ENCODE measurements at regions of chr10 and their contacts with region 1.

Region 1: DNA sequence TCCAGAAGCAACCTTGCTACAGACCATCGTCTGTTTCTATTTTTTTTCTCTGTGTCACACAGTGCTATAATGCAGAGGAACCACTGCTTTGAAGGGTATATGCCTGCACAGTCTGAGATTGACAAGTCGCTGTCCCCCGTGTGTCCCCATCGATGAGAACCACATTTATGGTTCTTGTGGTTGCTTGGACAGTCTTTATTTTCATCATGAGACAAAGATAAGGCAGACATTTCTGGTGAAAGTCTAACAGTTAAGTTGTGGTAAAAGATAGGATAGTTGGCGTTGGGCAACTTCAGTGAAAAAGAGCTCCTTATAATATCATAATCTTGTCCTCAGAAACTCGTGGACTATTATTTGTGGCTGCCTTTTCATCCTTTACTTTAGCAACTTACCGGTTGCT is 6.3 kb upstream of the AKR1E2 start:
- DNase-seq: no peak
- H3K4me3 ChIP-seq: no peak overlapping the region
- H3K27ac ChIP-seq: no peak overlapping the region
- H3K4me1 ChIP-seq: no peaks in the 10 kb centered on the region
- H3K27me3 ChIP-seq: no peaks in the 10 kb centered on the region
- CTCF ChIP-seq: no peak

Region 2: GRCh38 chr10:4028027-4028471 is 791.7 kb before region 1 on chr10:
- CTCF ChIA-PET with region 1: no interaction called
- POLR2A ChIA-PET with region 1: no interaction called
- intact Hi-C with region 1: no loop called
- DNase-seq: no peak
- H3K4me3 ChIP-seq: no peak overlapping the region
- H3K27ac ChIP-seq: no peak overlapping the region
- H3K4me1 ChIP-seq: no peaks in the 10 kb centered on the region
- H3K27me3 ChIP-seq: no peaks in the 10 kb centered on the region
- CTCF ChIP-seq: no peak

Region 3: GRCh38 chr10:5623081-5623748 is 803.5 kb after region 1 on chr10:
- CTCF ChIA-PET with region 1: interaction called, 9 read pairs
- POLR2A ChIA-PET with region 1: no interaction called
- intact Hi-C with region 1: loop called (anchors 5 kb)
- DNase-seq: peak; percentile 90
- H3K4me3 ChIP-seq: no peak overlapping the region
- H3K27ac ChIP-seq: no peak overlapping the region
- H3K4me1 ChIP-seq: no peaks in the 10 kb centered on the region
- H3K27me3 ChIP-seq: no peaks in the 10 kb centered on the region
- CTCF ChIP-seq: peak; percentile 93

Measured in A673 (cell line).